ENCODE measurements at regions of chr3 and their contacts with region 1.

Region 1: DNA sequence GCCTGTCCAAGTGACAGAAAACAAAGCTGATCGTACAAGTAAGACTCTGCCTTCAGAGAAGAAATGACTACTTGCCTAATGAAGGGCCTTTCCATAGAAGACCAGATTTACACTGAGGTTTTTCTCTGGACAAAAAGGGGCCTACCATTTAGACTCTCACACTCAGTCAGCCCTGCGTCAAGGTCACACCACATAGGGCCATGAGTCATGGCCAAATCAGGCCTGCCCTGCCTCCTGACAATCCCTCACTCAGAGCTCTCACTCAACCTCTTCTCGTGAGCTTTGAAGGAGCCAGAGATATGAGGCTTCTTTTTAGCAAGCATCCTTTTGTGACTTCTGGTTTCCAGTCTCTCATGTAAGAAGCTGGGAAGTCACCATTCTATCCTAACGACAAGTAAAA is 68.1 kb upstream of the NMNAT3 start:
- DNase-seq: no peak
- ATAC-seq: peak in 7 of 8 donors; percentile 38 to 94 (median 75)
- H3K4me3 ChIP-seq: no peak overlapping the region
- H3K27ac ChIP-seq: no peak overlapping the region
- H3K4me1 ChIP-seq: no peaks in the 10 kb centered on the region
- H3K27me3 ChIP-seq: peaks cover 0 to 7% (median 0%) of the 10 kb centered on the region in 7 donors
- CTCF ChIP-seq: no peak

Region 2: GRCh38 chr3:139830817-139831216 is 85.0 kb after region 1 on chr3:
- intact Hi-C with region 1: no loop called
- DNase-seq: peak; percentile 50 to 52
- ATAC-seq: peak; percentile 75 to 93 (median 79)
- H3K4me3 ChIP-seq: no peak overlapping the region
- H3K27ac ChIP-seq: no peak overlapping the region
- H3K4me1 ChIP-seq: no peaks in the 10 kb centered on the region
- H3K27me3 ChIP-seq: no peaks in the 10 kb centered on the region
- CTCF ChIP-seq: no peak

Region 3: GRCh38 chr3:139906418-139906817 is 160.6 kb after region 1 on chr3:
- intact Hi-C with region 1: loop called in 1 of 10 experiments (anchors 10 kb)
- DNase-seq: no peak
- ATAC-seq: no peak
- H3K4me3 ChIP-seq: no peak overlapping the region
- H3K27ac ChIP-seq: no peak overlapping the region
- H3K4me1 ChIP-seq: no peaks in the 10 kb centered on the region
- H3K27me3 ChIP-seq: no peaks in the 10 kb centered on the region
- CTCF ChIP-seq: no peak

Measured in heart right ventricle (tissue), 16 donors.